ENCODE measurements at regions of chr20 and their contacts with region 1.

Region 1: GRCh38 chr20:37282556-37282955 is 6.9 kb upstream of the MANBAL start:
- DNase-seq: peak in 3 of 5 donors; percentile 32 to 72 (median 59)
- H3K4me3 ChIP-seq: no peak overlapping the region
- H3K27ac ChIP-seq: no peak overlapping the region
- H3K4me1 ChIP-seq: peaks cover 0 to under 1% (median 0%) of the 10 kb centered on the region in 3 donors
- H3K27me3 ChIP-seq: no peaks in the 10 kb centered on the region
- CTCF ChIP-seq: peak; percentile 29

Region 2: GRCh38 chr20:37071481-37071911 is 211.1 kb before region 1 on chr20:
- intact Hi-C with region 1: no loop called
- DNase-seq: no peak
- H3K4me3 ChIP-seq: no peak overlapping the region
- H3K27ac ChIP-seq: no peak overlapping the region
- H3K4me1 ChIP-seq: no peaks in the 10 kb centered on the region
- H3K27me3 ChIP-seq: no peaks in the 10 kb centered on the region
- CTCF ChIP-seq: no peak

Region 3: DNA sequence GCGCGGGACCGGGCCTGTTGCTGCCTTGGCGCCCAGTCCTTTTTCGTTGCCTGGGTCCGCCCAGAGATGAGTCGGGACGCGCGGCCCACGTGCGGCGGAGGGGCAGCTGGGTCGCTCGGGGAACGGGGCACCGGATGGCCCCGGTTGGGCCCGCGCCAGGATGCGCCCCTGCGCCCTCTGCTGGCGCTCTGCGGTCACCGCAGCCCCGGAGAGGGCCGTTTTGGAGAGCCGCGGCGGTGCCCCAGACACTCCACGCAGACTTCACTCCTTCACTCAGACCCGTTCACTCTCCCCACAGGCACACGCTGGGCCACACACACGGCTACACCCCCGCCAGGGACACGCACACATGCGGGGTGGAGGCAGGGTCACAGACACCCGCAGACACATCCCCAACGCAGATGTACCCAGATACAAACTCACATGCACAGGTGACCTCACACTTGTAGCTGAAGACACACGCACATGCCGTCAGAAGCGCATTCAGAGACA is 102.2 kb after region 1 on chr20:
- intact Hi-C with region 1: loop called (anchors 10 kb)
- DNase-seq: peak; percentile 45 to 84 (median 75)
- H3K4me3 ChIP-seq: peak overlapping the region in 1 of 3 donors; percentile 29
- H3K27ac ChIP-seq: no peak overlapping the region
- H3K4me1 ChIP-seq: peaks cover 0 to 3% (median 0%) of the 10 kb centered on the region in 3 donors
- H3K27me3 ChIP-seq: no peaks in the 10 kb centered on the region
- CTCF ChIP-seq: peak; percentile 89

Measured in kidney (tissue), 22 donors.